ENCODE measurements at regions of chrX and their contacts with region 1.

Region 1: DNA sequence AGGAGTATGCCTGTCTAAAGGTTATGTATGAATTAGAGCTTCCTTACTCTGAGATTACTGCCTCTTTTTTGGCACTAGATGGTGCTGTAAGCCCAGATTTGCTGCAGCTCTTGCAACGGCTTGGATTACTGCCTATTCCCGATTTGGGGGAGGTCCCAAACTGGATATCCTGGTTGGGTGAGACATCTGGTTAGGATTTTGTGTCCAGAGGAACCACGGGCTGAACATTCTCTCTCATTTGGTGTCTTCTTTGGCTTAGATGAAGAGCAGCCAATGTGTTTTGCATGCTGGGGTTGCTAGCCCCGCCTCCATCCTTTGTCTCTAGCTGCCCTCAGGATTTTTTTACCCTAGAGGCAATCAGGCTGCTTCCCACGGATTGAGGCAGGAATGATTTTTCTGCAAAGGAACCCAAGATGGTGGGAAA is 31.9 kb downstream of the F8A1 start:
- DNase-seq: peak; percentile 45
- H3K4me3 Mint-ChIP-seq: peak overlapping the region; percentile 33
- H3K27ac Mint-ChIP-seq: no peak overlapping the region
- H3K4me1 Mint-ChIP-seq: peaks cover 8% of the 10 kb centered on the region
- H3K27me3 Mint-ChIP-seq: no peaks in the 10 kb centered on the region
- CTCF ChIP-seq: peak; percentile 73

Region 2: DNA sequence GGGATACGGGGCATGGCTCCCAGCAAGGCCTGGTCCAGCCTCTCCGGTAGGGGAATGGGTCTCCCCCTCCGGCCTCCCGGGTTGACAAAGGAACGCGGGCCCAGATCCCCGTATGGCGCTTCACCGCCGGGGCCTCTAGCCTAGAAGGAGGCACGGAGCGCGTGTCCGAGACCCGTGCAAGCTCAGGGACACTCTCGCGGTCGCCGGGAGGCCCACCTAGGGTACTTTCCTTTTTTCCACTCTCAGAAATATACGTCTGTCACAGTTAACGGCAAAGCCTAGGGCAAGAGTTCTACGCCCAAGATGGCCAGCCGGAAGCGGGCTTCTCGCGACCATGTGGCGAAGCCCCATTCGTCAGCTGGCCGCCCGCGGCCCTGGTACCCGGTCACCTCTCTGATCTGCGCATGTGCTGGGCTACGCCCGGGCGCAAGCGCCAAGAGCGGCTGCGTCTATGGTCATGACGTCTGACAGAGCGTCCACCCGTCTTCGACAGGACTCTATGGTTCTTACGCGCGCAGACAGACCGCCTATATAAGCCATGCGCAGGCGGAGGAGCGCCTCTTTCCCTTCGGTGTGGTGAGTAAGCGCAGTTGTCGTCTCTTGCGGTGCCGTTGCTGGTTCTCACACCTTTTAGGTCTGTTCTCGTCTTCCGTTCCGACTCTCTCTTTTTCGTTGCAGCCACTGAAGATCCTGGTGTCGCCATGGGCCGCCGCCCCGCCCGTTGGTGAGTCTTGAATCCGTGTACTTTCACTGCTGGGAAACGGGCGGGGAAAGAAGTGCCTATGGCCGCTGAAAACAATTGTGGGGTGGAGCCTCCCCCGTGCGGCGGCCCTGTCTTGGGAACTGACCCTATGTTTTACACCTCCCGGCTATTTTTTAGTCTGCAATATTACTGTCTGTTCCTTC is 520.0 kb before region 1 on chrX and contains the start of gene RPL10:
- CTCF ChIA-PET with region 1: no interaction called
- intact Hi-C with region 1: no loop called
- DNase-seq: peak; percentile 95
- H3K4me3 Mint-ChIP-seq: peak within 1 kb of the TSS; percentile 86
- H3K27ac Mint-ChIP-seq: peak within 1 kb of the TSS; percentile 99
- H3K4me1 Mint-ChIP-seq: no peaks in the 10 kb centered on the region
- H3K27me3 Mint-ChIP-seq: peaks cover 16% of the 10 kb centered on the region
- CTCF ChIP-seq: no peak
- total RNA-seq, gene RPL10: 1,458 and 1,495 TPM in 2 replicates

Region 3: GRCh38 chrX:154967603-154968002 is 49.5 kb after region 1 on chrX:
- CTCF ChIA-PET with region 1: no interaction called
- intact Hi-C with region 1: loop called (anchors 5 kb)
- DNase-seq: no peak
- H3K4me3 Mint-ChIP-seq: no peak overlapping the region
- H3K27ac Mint-ChIP-seq: no peak overlapping the region
- H3K4me1 Mint-ChIP-seq: no peaks in the 10 kb centered on the region
- H3K27me3 Mint-ChIP-seq: no peaks in the 10 kb centered on the region
- CTCF ChIP-seq: no peak

Region 4: GRCh38 chrX:155645180-155645579 is 727.1 kb after region 1 on chrX:
- CTCF ChIA-PET with region 1: no interaction called
- intact Hi-C with region 1: loop called (anchors 5 kb)
- DNase-seq: no peak
- H3K4me3 Mint-ChIP-seq: no peak overlapping the region
- H3K27ac Mint-ChIP-seq: no peak overlapping the region
- H3K4me1 Mint-ChIP-seq: no peaks in the 10 kb centered on the region
- H3K27me3 Mint-ChIP-seq: no peaks in the 10 kb centered on the region
- CTCF ChIP-seq: no peak

Region 5: GRCh38 chrX:155819966-155820491 is 902.0 kb after region 1 on chrX:
- CTCF ChIA-PET with region 1: no interaction called
- intact Hi-C with region 1: loop called (anchors 5 kb)
- DNase-seq: peak; percentile 73
- H3K4me3 Mint-ChIP-seq: no peak overlapping the region
- H3K27ac Mint-ChIP-seq: no peak overlapping the region
- H3K4me1 Mint-ChIP-seq: no peaks in the 10 kb centered on the region
- H3K27me3 Mint-ChIP-seq: no peaks in the 10 kb centered on the region
- CTCF ChIP-seq: peak; percentile 53

Measured in Calu3 (cell line).